ENCODE measurements at regions of chr10 and their contacts with region 1.

Region 1: GRCh38 chr10:6401562-6402348 is 178.3 kb downstream of the PRKCQ start:
- DNase-seq: peak; percentile 89
- H3K4me3 ChIP-seq: peak overlapping the region; percentile 23 to 80 (median 36)
- H3K27ac ChIP-seq: peak overlapping the region; percentile 86
- H3K4me1 ChIP-seq: peaks cover 6% of the 10 kb centered on the region
- H3K27me3 ChIP-seq: peaks cover 2 to 9% of the 10 kb centered on the region in 2 experiments
- CTCF ChIP-seq: peak; percentile 62 to 76
- POLR2A ChIP-seq: no peak

Region 2: DNA sequence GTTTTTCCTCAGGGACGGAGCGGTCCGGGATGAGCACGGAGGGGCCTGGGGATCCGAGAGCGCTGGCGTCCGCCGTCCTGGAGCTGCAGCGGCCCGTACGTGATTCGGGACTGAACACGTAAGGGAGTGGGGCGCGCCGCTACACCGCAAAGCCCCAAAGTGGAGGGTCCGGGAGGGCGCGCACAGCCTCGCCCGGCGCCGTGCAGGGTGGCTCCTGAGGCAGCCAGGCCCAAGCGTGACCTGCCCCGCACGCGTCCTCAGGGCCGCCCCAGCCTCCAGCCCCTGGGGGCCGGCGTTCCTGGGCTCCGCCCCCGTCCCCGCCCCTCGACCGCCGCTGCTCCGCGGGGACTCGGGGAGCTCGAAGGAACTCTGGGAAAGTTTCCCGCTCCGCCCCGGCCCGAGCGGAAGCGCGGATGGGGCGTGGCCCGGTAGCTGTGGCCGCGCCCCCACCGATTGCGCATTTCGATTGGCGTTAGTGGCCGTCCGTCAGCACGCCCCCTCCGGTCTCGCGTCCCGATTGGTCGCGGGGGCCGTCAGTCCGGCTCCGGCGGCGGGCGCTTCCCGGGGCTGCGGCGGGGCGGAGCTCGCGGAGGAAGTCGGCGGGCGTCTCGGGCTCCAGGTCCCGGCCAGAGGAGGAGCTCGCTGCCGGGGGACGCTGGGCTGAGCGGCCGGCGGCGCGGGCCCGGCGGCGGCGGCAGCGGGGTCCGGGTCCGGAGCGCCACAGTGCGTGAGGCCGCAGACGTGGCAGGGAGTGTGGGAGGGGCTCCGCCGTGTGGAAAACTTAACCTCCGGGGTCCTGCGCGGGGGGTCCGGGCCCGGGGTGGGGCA is 511.9 kb before region 1 on chr10 and contains the starts of genes ANKRD16 and FBH1:
- CTCF ChIA-PET with region 1: interaction called, 11 read pairs
- POLR2A ChIA-PET with region 1: no interaction called
- dilution Hi-C with region 1: no loop called
- intact Hi-C with region 1: no loop called
- DNase-seq: peak; percentile 99
- H3K4me3 ChIP-seq: peak within 1 kb of the TSS; percentile 16 to 95 (median 62)
- H3K27ac ChIP-seq: peak within 1 kb of the TSS; percentile 44
- H3K4me1 ChIP-seq: peaks cover 36% of the 10 kb centered on the region
- H3K27me3 ChIP-seq: no peaks in the 10 kb centered on the region
- CTCF ChIP-seq: no peak
- POLR2A ChIP-seq: peak; percentile 82
- total RNA-seq, gene ANKRD16: 4.4 and 6.9 TPM in 2 replicates
- total RNA-seq, gene FBH1: 86.1 and 97.0 TPM in 2 replicates

Region 3: DNA sequence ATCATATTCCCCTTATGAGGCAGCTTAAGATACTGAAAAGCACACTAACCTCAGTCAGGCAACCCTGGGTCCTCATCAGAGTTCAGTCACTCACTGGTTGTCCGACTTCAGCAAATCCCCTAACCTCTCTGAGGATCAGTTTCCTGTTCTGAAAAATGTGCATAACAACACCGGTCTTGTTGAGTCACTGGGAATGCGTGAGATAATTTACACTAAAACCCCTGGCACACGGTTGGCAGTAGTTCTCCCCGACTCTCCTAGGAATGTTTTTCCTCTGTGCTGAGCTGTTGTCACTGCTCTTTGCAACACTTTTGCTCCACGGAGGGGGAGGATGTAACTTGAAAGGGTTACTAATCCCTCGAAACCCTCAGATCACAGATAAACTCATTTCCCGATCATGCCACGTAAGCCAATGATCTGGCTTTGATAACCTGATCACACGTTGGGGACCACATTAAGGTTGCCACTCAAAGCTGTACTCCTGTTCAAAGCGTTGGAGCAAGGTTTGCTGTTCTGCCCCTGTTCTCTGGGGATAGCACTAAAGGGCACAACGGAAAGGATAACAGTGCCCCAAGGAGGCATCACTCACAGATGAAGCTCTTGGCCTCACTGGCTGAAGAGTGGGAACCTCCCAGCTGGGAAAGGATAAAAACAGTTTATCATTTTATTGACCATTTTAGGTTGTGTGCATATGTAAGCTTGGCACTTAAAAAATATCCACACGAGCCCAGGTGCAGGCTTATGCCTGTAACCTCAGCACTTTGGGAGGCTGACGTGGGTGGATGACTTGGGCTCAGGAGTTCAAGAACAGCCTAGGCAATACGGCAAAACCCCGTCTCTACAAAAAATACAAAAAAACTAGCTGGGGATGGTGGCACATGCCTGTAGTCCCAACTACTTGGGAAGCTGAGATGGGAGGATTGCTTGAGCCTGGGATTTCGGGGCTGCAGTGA is 318.0 kb before region 1 on chr10:
- CTCF ChIA-PET with region 1: interaction called, 88 read pairs
- POLR2A ChIA-PET with region 1: interaction called, 6 read pairs
- dilution Hi-C with region 1: no loop called
- intact Hi-C with region 1: loop called (anchors 1 kb)
- DNase-seq: peak; percentile 78
- H3K4me3 ChIP-seq: no peak overlapping the region
- H3K27ac ChIP-seq: no peak overlapping the region
- H3K4me1 ChIP-seq: peaks cover 22% of the 10 kb centered on the region
- H3K27me3 ChIP-seq: no peaks in the 10 kb centered on the region
- CTCF ChIP-seq: no peak
- POLR2A ChIP-seq: no peak

Region 4: DNA sequence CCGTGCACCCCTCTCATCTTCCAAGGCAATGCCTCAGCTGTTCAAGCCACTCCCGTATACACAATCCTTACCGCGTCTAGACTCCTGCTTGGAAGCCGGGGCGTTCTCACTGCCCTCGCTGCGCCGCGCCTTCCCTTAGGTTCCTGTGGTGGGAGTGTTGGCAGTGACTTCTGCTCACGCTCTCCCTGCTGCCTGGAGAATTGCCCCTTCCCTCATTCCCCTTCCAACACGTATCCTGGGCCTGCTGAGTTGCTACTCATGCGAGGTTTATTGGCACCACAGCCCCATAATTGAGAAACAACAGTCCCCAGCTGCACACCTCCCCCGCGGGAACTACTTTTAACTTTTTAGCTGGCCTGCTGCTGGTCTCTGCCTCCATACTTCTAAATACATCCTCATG is 281.1 kb before region 1 on chr10:
- CTCF ChIA-PET with region 1: interaction called, 22 read pairs
- POLR2A ChIA-PET with region 1: no interaction called
- dilution Hi-C with region 1: no loop called
- intact Hi-C with region 1: no loop called
- DNase-seq: no peak
- H3K4me3 ChIP-seq: no peak overlapping the region
- H3K27ac ChIP-seq: no peak overlapping the region
- H3K4me1 ChIP-seq: peaks cover 3% of the 10 kb centered on the region
- H3K27me3 ChIP-seq: no peaks in the 10 kb centered on the region
- CTCF ChIP-seq: no peak
- POLR2A ChIP-seq: no peak

Region 5: DNA sequence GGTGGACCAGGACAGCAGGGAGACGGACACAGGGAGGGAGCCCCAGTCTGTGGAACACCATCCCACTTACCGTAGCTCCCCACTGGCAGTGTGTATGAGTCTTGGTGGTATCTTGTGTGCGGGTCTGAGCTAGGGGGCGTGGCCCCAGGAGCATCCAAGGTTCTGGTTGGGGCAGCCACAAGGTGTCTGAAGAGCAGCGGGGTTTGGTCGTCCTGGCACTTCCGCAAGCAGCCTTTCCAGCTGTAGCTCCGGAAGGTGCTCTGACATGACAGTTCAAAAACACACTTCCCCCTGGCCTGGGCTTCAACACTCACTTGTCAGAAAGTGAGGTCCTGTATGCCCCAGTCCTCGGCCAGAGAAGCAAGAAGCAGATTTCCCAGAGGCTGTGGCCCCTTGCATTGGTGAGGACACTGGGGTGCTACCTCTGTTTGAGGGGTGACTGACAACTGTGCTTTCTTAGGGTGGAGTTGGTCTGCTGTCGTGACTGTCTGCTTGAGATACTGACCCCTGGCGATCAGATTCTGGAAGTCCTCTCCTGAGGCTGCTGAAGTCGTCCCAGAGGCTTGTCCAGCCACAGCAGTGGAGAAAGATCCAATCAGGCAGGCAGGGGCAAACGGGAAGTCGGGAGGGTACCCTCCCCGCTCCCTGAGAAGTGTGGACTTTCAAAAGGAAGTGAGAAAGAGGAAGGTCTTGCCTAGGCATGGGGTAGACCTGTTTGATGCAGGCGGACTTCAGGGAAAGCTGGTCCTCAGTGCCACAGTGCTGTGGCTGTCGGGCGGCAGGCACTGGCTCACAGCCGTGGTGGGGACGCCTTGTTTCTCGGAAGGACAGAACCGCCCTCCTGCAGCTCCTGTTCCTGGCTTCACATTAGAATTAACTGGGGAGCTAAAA is 250.4 kb before region 1 on chr10:
- CTCF ChIA-PET with region 1: interaction called, 49 read pairs
- POLR2A ChIA-PET with region 1: no interaction called
- dilution Hi-C with region 1: no loop called
- intact Hi-C with region 1: loop called (anchors 1 kb)
- DNase-seq: peak; percentile 83
- H3K4me3 ChIP-seq: peak overlapping the region in 1 of 3 experiments; percentile 16
- H3K27ac ChIP-seq: peak overlapping the region; percentile 25
- H3K4me1 ChIP-seq: peaks cover 9% of the 10 kb centered on the region
- H3K27me3 ChIP-seq: no peaks in the 10 kb centered on the region
- CTCF ChIP-seq: peak; percentile 72 to 78
- POLR2A ChIP-seq: no peak

Region 6: GRCh38 chr10:6202684-6203330 is 198.9 kb before region 1 on chr10 and contains the start of gene PFKFB3:
- CTCF ChIA-PET with region 1: interaction called, 285 read pairs
- POLR2A ChIA-PET with region 1: interaction called, 40 read pairs
- dilution Hi-C with region 1: no loop called
- intact Hi-C with region 1: loop called (anchors 1 kb)
- DNase-seq: peak; percentile 93
- H3K4me3 ChIP-seq: peak within 1 kb of the TSS; percentile 73 to 87 (median 83)
- H3K27ac ChIP-seq: peak within 1 kb of the TSS; percentile 56
- H3K4me1 ChIP-seq: peaks cover 23% of the 10 kb centered on the region
- H3K27me3 ChIP-seq: no peaks in the 10 kb centered on the region
- CTCF ChIP-seq: peak; percentile 90 to 98
- POLR2A ChIP-seq: peak; percentile 98
- total RNA-seq, gene PFKFB3: 33.7 and 35.6 TPM in 2 replicates

Region 7: DNA sequence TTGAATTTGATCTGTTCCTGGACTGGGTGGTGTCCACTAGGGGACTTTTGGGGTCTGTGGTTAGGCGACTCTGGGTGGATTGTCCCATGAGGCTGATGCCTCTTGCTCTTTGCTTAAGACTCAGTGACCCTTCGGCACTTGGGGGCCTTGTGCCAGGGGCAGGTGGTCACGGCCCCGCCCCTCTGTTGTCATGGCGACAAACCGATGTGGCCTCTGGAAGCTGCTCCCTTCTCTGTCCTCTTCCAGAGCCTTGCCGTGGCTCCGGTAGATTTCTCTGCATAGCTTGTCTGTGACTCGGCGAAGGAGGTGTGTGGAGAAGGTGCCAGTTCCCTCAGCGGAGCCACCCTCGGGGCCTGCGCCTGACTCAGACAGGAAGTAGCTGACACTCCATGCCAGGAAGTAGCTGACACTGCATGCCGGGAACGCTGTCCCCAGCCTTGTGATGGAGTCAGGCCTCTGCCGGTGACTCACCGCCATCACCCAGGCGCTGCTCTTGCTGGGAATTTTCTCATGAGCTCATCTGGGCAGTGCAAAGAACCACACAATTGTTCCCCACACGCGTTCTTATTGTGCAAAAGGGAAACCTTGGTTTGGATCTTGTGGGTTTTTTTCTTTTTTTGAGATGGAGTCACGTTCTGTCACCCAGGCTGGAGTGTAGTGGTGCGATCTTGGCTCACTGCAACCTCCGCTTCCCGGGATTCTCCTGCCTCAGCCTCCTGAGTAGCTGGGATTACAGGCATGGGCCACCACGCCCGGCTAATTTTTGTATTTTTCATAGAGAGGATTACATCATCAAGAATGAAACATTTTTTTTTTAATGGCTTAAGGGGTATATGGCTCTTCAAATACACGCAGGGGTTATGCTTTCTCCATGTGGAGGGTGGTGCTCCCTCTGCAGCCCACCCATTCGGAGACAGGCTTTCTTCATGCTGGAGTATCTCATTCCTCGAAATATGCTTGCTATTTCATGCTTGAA is 126.4 kb before region 1 on chr10:
- CTCF ChIA-PET with region 1: interaction called, 15 read pairs
- POLR2A ChIA-PET with region 1: interaction called, 3 read pairs
- dilution Hi-C with region 1: no loop called
- intact Hi-C with region 1: loop called (anchors 1 kb)
- DNase-seq: peak; percentile 94
- H3K4me3 ChIP-seq: peak overlapping the region in 1 of 3 experiments; percentile 20
- H3K27ac ChIP-seq: peak overlapping the region; percentile 88
- H3K4me1 ChIP-seq: peaks cover 16% of the 10 kb centered on the region
- H3K27me3 ChIP-seq: no peaks in the 10 kb centered on the region
- CTCF ChIP-seq: peak in 1 of 2 donors; percentile 3
- POLR2A ChIP-seq: peak; percentile 42

Region 8: GRCh38 chr10:6445501-6446316 is 44.0 kb after region 1 on chr10:
- CTCF ChIA-PET with region 1: no interaction called
- POLR2A ChIA-PET with region 1: no interaction called
- dilution Hi-C with region 1: no loop called
- intact Hi-C with region 1: no loop called
- DNase-seq: peak; percentile 41
- H3K4me3 ChIP-seq: no peak overlapping the region
- H3K27ac ChIP-seq: no peak overlapping the region
- H3K4me1 ChIP-seq: no peaks in the 10 kb centered on the region
- H3K27me3 ChIP-seq: no peaks in the 10 kb centered on the region
- CTCF ChIP-seq: peak; percentile 41 to 47
- POLR2A ChIP-seq: no peak

Measured in endothelial cell of umbilical vein (primary cell).